B cell (primary cell): ENCODE measurements at regions of chr3 and their contacts with region 1.

Region 1: GRCh38 chr3:108662130-108662738 is 72.7 kb downstream of the DZIP3 start:
- DNase-seq: peak; percentile 76
- ATAC-seq: peak; percentile 56
- H3K4me3 ChIP-seq: no peak overlapping the region
- H3K4me3 Mint-ChIP-seq: no peak overlapping the region
- H3K27ac ChIP-seq: no peak overlapping the region
- H3K27ac Mint-ChIP-seq: no peak overlapping the region
- H3K4me1 ChIP-seq: no peaks in the 10 kb centered on the region
- H3K4me1 Mint-ChIP-seq: peaks cover 2% of the 10 kb centered on the region
- H3K27me3 ChIP-seq: no peaks in the 10 kb centered on the region
- H3K27me3 Mint-ChIP-seq: no peaks in the 10 kb centered on the region
- CTCF ChIP-seq: peak; percentile 92

Region 2: GRCh38 chr3:108489771-108490170 is 172.5 kb before region 1 on chr3:
- CTCF ChIA-PET with region 1: no interaction called
- POLR2A ChIA-PET with region 1: no interaction called
- intact Hi-C with region 1: loop called (anchors 2 kb)
- DNase-seq: peak; percentile 78
- ATAC-seq: peak; percentile 68
- H3K4me3 ChIP-seq: no peak overlapping the region
- H3K4me3 Mint-ChIP-seq: no peak overlapping the region
- H3K27ac ChIP-seq: no peak overlapping the region
- H3K27ac Mint-ChIP-seq: no peak overlapping the region
- H3K4me1 ChIP-seq: peaks cover 0 to 2% of the 10 kb centered on the region in 2 donors
- H3K4me1 Mint-ChIP-seq: peaks cover 4% of the 10 kb centered on the region
- H3K27me3 ChIP-seq: no peaks in the 10 kb centered on the region
- H3K27me3 Mint-ChIP-seq: no peaks in the 10 kb centered on the region
- CTCF ChIP-seq: peak; percentile 87

Region 3: GRCh38 chr3:108673988-108674661 is 11.9 kb after region 1 on chr3:
- CTCF ChIA-PET with region 1: interaction called, 19 read pairs
- POLR2A ChIA-PET with region 1: no interaction called
- intact Hi-C with region 1: no loop called
- DNase-seq: no peak
- ATAC-seq: no peak
- H3K4me3 ChIP-seq: no peak overlapping the region
- H3K4me3 Mint-ChIP-seq: no peak overlapping the region
- H3K27ac ChIP-seq: no peak overlapping the region
- H3K27ac Mint-ChIP-seq: no peak overlapping the region
- H3K4me1 ChIP-seq: peaks cover 6 to 8% of the 10 kb centered on the region in 2 donors
- H3K4me1 Mint-ChIP-seq: peaks cover 12% of the 10 kb centered on the region
- H3K27me3 ChIP-seq: no peaks in the 10 kb centered on the region
- H3K27me3 Mint-ChIP-seq: no peaks in the 10 kb centered on the region
- CTCF ChIP-seq: no peak

Region 4: GRCh38 chr3:108698461-108698860 is 36.2 kb after region 1 on chr3:
- CTCF ChIA-PET with region 1: no interaction called
- POLR2A ChIA-PET with region 1: no interaction called
- intact Hi-C with region 1: no loop called
- DNase-seq: no peak
- ATAC-seq: no peak
- H3K4me3 ChIP-seq: no peak overlapping the region
- H3K4me3 Mint-ChIP-seq: no peak overlapping the region
- H3K27ac ChIP-seq: no peak overlapping the region
- H3K27ac Mint-ChIP-seq: no peak overlapping the region
- H3K4me1 ChIP-seq: no peaks in the 10 kb centered on the region
- H3K4me1 Mint-ChIP-seq: no peaks in the 10 kb centered on the region
- H3K27me3 ChIP-seq: no peaks in the 10 kb centered on the region
- H3K27me3 Mint-ChIP-seq: no peaks in the 10 kb centered on the region
- CTCF ChIP-seq: no peak

Region 5: GRCh38 chr3:108818404-108818803 is 156.2 kb after region 1 on chr3:
- CTCF ChIA-PET with region 1: no interaction called
- POLR2A ChIA-PET with region 1: no interaction called
- intact Hi-C with region 1: loop called (anchors 10 kb)
- DNase-seq: no peak
- ATAC-seq: no peak
- H3K4me3 ChIP-seq: no peak overlapping the region
- H3K4me3 Mint-ChIP-seq: no peak overlapping the region
- H3K27ac ChIP-seq: no peak overlapping the region
- H3K27ac Mint-ChIP-seq: no peak overlapping the region
- H3K4me1 ChIP-seq: no peaks in the 10 kb centered on the region
- H3K4me1 Mint-ChIP-seq: no peaks in the 10 kb centered on the region
- H3K27me3 ChIP-seq: no peaks in the 10 kb centered on the region
- H3K27me3 Mint-ChIP-seq: peaks cover 3% of the 10 kb centered on the region
- CTCF ChIP-seq: no peak